ENCODE measurements at regions of chr1 and their contacts with region 1.

Region 1: DNA sequence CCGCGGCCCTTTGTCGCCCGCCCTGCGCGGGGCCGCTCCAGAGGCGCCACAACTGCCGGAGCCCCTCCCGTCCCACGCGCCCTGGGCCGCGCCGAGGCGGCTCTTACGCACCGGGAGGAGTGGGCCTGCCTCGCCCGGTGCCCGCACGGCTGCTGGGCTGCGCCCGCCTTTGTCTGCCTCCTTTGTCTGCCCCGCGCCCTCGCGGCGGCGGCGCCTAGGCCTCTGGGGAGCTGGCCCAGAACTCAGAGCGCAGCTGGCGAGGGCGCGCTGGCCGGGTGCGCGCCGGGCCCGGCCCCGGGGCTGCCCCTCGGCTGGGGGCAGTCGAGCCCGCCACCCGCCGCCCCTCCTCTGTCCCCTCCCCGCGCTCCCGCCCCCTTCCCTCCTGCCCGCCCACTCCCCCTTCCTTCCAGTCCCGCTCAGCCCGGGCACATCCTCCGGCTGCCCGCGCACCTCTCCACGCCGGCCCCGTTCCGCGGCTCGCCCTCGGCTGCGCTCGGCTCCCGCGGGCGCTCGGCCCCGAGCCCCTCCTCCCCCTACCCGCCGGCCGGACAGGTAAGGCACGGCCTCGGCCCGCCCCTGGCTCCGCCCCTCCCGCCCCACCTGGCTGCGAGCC is at the start of gene DRAXIN:
- DNase-seq: no peak
- ATAC-seq: peak; percentile 52
- H3K4me3 ChIP-seq: peak within 1 kb of the TSS; percentile 50 to 69
- H3K27ac ChIP-seq: peak within 1 kb of the TSS; percentile 30; the same call in 1 of the 2 replicates
- H3K4me1 ChIP-seq: peaks cover 33 to 47% of the 10 kb centered on the region in 2 experiments
- H3K27me3 ChIP-seq: peaks cover 17% of the 10 kb centered on the region; the same call in 1 of the 2 replicates
- CTCF ChIP-seq: no peak
- POLR2A ChIP-seq: no peak
- RAD21 ChIP-seq: no peak
- total RNA-seq, gene DRAXIN: 0.47 TPM

Region 2: DNA sequence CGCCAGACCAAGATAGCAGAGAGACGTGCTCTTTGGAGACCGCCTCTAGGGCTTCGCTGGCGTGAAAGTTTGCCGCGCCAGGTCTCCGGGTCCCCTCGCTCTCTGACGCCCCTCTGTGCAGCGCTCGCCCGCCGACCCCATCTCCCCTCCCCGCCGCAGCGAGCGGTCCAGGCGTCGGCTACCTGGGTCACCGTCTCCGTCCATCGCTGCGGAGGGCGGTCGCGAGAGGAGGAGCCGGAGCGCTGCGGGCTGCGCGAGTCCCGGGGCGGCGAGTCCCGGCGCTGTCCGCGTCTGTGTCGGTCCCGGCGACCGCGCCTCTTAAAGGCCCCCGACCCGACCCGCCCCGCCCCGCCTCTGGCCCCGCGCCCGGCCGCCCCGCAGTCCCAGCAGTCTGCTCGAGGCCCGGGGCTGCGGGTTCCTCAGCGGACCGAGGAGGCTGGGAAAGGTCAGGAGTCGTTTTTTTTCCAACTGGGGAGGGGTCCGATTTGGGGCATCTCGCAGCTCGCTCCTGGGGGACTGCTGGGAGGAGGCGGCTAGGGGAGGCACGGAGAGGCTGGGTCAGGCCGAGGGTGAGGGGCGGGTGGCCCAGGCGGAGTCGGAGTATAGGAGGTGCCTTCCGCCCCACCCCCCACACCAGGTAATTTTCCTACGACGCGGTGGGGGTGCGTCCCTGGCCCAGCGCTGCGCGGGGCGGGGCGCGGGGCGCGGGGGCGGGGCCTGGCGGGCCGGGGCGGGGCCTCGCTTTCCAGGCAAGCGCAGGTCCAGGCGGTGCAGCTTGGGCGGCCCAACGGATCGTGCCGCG is 37.1 kb before region 1 on chr1 and contains the starts of genes FBXO2 and FBXO44:
- CTCF ChIA-PET with region 1: no interaction called
- POLR2A ChIA-PET with region 1: interaction called, 10 read pairs
- RAD21 ChIA-PET with region 1: no interaction called
- intact Hi-C with region 1: no loop called
- DNase-seq: peak; percentile 26
- ATAC-seq: peak; percentile 75
- H3K4me3 ChIP-seq: peak within 1 kb of the TSS; percentile 63 to 80
- H3K27ac ChIP-seq: peak within 1 kb of the TSS; percentile 87
- H3K4me1 ChIP-seq: peaks cover 28 to 53% of the 10 kb centered on the region in 2 experiments; a peak in 3 of 4 replicates
- H3K27me3 ChIP-seq: no peaks in the 10 kb centered on the region
- CTCF ChIP-seq: no peak
- POLR2A ChIP-seq: no peak
- RAD21 ChIP-seq: no peak
- total RNA-seq, gene FBXO2: 81.1 TPM
- total RNA-seq, gene FBXO44: 60.9 TPM

Region 3: DNA sequence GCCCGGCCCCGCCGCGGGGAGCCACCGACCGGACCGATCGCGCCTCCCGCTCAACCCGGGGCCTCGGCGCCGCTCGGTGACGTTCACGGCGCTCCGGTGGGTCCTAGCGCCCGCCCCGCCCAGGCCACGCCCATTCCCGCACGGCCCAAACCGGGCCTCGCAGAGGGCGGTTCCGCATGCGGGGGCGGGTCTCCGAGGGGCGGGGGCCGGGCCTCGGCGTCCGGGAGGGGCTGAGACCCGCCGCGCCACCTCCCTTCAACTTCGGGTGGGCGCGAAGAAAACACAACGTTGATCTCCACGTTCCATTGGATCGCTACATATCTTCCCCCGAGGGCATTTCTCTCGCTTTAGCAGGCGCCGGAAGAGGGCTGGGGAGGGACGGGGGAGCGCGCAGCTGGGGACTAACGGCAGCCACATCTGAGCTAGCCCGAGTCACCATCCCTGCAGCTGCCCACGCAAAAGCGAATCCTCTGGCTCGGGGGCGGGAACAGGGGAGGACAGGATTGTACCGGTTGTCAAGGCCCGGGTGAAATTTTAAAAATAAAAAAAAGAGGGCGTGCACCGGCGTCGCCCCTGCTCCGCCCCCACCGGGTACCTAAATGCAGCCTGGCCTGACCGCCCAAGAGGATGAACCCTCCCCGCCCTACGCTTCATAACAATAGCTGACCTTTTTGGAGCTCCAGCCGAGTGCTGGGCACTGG is 10.2 kb before region 1 on chr1 and contains the start of gene MAD2L2:
- CTCF ChIA-PET with region 1: interaction called, 4 read pairs
- POLR2A ChIA-PET with region 1: interaction called, 14 read pairs
- RAD21 ChIA-PET with region 1: no interaction called
- intact Hi-C with region 1: no loop called
- DNase-seq: peak; percentile 58
- ATAC-seq: peak; percentile 85
- H3K4me3 ChIP-seq: peak within 1 kb of the TSS; percentile 89 to 96
- H3K27ac ChIP-seq: peak within 1 kb of the TSS; percentile 70
- H3K4me1 ChIP-seq: peaks cover 15 to 24% of the 10 kb centered on the region in 2 experiments; a peak in 3 of 4 replicates
- H3K27me3 ChIP-seq: no peaks in the 10 kb centered on the region
- CTCF ChIP-seq: no peak
- POLR2A ChIP-seq: peak; percentile 67
- RAD21 ChIP-seq: no peak
- total RNA-seq, gene MAD2L2: 93.8 TPM

Measured in HCT116 (cell line).